Activated naive CD8-positive, alpha-beta T cell treated with anti-CD3 and anti-CD28 coated beads, Interleukin-2, amount 10 ng/mL, durations not matched to agents 7 days and 5 days (primary cell): ENCODE measurements at regions of chr1 and their contacts with region 1.

Region 1: DNA sequence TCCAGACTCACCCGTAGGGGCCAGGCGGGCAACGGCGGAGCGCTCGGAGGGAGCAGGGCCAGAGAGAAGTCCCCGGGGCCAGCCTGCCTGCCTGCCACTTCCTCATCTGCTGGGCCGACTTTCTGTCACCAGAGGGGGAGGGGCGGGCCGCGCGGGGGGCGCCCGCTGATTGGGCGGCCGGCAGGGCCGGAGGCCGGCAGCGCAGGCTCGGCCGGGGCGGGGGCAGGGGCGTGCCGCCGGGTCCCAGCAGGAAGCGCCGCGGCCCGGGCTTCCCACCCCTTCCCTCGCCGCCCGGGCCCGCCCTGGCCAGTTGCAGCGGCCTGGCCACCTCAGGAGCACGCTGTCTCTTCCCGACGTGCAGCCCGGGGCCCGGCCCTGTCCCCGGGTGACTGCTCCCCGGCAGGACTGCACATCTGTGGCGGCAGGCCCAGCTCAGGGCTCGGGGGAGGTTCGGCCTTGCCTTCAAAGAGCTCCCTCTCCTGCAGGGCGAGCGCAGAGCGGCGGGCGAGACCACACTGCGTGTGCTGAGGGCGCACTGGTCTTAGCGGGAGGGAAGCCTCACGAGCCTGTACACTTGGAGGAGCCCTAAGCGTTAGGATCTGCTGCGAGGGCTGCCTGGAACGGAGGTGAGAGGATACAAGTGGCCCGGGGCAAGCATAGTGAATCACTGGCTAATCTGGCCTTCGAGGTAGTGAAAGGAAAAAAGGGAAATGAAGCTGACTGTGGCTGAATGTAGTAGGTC is at the start of gene ELOVL1:
- DNase-seq: peak; percentile 95
- ATAC-seq: peak; percentile 84
- H3K4me3 Mint-ChIP-seq: peak within 1 kb of the TSS; percentile 94
- H3K27ac Mint-ChIP-seq: peak within 1 kb of the TSS; percentile 86
- H3K4me1 Mint-ChIP-seq: peaks cover 30% of the 10 kb centered on the region
- H3K27me3 Mint-ChIP-seq: no peaks in the 10 kb centered on the region
- total RNA-seq, gene ELOVL1: 51.3 to 53.7 TPM

Region 2: GRCh38 chr1:43329995-43330751 is 37.9 kb before region 1 on chr1:
- POLR2A ChIA-PET with region 1: no interaction called
- DNase-seq: no peak
- ATAC-seq: no peak
- H3K4me3 Mint-ChIP-seq: no peak overlapping the region
- H3K27ac Mint-ChIP-seq: no peak overlapping the region
- H3K4me1 Mint-ChIP-seq: peaks cover 6% of the 10 kb centered on the region
- H3K27me3 Mint-ChIP-seq: no peaks in the 10 kb centered on the region

Region 3: GRCh38 chr1:43389326-43390313 is 21.5 kb after region 1 on chr1 and contains the starts of genes MED8 and SZT2:
- POLR2A ChIA-PET with region 1: interaction called, 47 read pairs
- DNase-seq: peak; percentile 87
- ATAC-seq: peak; percentile 91
- H3K4me3 Mint-ChIP-seq: peak within 1 kb of the TSS; percentile 95
- H3K27ac Mint-ChIP-seq: peak within 1 kb of the TSS; percentile 91
- H3K4me1 Mint-ChIP-seq: peaks cover 23% of the 10 kb centered on the region
- H3K27me3 Mint-ChIP-seq: no peaks in the 10 kb centered on the region
- total RNA-seq, gene MED8: 34.3 to 35.3 TPM
- total RNA-seq, gene SZT2: 84.8 to 88.2 TPM